Ascending aorta (tissue), 2 donors: ENCODE measurements at regions of chr14 and their contacts with region 1.

Region 1: GRCh38 chr14:92578511-92578910 is 64.9 kb downstream of the RIN3 start:
- DNase-seq: peak; percentile 66 to 90
- H3K4me3 ChIP-seq: no peak overlapping the region
- H3K27ac ChIP-seq: peak overlapping the region; percentile 66 to 74
- H3K4me1 ChIP-seq: peaks cover 0 to 6% of the 10 kb centered on the region in 2 donors
- H3K27me3 ChIP-seq: no peaks in the 10 kb centered on the region
- CTCF ChIP-seq: no peak

Region 2: GRCh38 chr14:92409043-92409442 is 169.5 kb before region 1 on chr14:
- intact Hi-C with region 1: no loop called
- DNase-seq: peak in 1 of 2 donors; percentile 70
- H3K4me3 ChIP-seq: no peak overlapping the region
- H3K27ac ChIP-seq: peak overlapping the region; percentile 41 to 52
- H3K4me1 ChIP-seq: peaks cover 0 to 12% of the 10 kb centered on the region in 2 donors
- H3K27me3 ChIP-seq: no peaks in the 10 kb centered on the region
- CTCF ChIP-seq: no peak

Region 3: DNA sequence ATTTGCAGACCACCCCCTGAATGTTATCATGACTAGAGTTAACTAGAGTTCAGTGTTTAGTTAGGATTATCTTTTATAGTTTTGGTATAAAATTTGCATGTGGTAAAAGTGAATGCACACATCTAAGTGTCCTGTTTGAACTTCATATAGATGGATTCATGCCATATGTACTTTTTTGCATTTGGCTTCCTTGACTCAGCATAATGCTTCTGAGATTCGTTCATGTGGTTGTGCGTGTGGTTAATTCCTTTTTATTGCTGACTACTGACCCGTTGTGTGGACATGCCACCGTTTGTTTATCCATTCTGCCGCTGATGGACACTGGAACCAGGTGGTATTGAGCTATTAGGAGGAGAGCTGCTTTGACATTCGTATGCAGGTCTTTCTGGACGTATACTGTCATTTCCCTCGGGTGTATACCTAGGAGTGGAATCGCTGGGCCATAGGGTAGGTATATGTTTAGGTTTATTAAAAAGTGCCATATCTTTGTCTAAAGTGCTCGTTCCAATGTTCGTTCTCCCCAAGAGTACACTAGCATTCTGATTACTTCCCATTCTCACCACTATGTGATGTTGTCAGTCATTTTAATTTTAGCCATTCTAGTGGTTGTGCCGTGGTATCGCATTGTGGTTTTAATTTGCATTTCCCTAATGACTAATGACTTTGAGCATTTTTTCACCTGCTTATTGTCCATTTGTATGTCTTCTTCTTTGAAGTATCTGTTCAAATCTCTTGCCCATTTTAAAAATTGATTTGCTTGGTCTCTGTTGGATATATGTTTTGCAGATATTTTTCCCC is 27.3 kb before region 1 on chr14:
- intact Hi-C with region 1: loop called (anchors 2 kb)
- DNase-seq: no peak
- H3K4me3 ChIP-seq: no peak overlapping the region
- H3K27ac ChIP-seq: peak overlapping the region; percentile 87 to 93
- H3K4me1 ChIP-seq: peaks cover 16 to 45% of the 10 kb centered on the region in 2 donors
- H3K27me3 ChIP-seq: no peaks in the 10 kb centered on the region
- CTCF ChIP-seq: peak in 1 of 3 experiments; percentile 40